ENCODE measurements at regions of chr14 and their contacts with region 1.

Region 1: GRCh38 chr14:104665657-104666522 is 23.5 kb upstream of the INF2 start:
- DNase-seq: peak in 7 of 9 donors; percentile 33 to 65 (median 55)
- ATAC-seq: peak; percentile 90
- H3K4me3 ChIP-seq: no peak overlapping the region
- H3K4me3 Mint-ChIP-seq: peak overlapping the region in 9 of 10 donors; percentile 7 to 80 (median 39)
- H3K27ac ChIP-seq: peak overlapping the region; percentile 17
- H3K27ac Mint-ChIP-seq: peak overlapping the region in 8 of 9 donors; percentile 60 to 90 (median 78)
- H3K4me1 ChIP-seq: peaks cover 12 to 14% of the 10 kb centered on the region in 2 donors
- H3K4me1 Mint-ChIP-seq: peaks cover 13 to 32% (median 24%) of the 10 kb centered on the region in 7 donors
- H3K27me3 ChIP-seq: peaks cover 0 to 5% of the 10 kb centered on the region in 2 donors
- H3K27me3 Mint-ChIP-seq: peaks cover 0 to 25% (median 8%) of the 10 kb centered on the region in 5 donors

Region 2: DNA sequence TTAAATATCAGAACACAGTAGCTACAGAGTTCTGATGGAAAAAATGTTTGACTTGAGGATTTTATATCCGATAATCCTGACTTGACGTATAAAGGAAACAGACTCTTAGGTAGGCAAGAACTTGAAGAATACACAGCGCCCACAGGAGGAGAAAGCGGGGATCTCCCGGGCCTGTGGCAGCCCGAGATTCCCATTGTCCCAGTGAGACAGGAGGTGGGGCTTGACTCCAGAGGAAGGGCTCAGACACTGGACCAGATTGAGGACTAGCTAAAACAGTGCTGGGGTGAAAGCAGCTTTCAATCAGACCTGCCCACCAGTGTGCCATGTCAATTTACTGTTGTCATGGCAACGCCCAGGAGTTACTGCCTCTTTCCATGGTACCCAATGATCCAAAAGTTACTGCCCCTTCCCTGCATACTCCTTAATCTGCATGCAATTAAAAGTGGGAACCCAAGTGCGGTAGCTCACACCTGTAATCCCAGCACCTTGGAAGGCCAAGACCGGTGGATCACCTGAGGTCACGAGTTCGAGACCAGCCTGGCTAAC is 137.3 kb before region 1 on chr14:
- CTCF ChIA-PET with region 1: no interaction called
- POLR2A ChIA-PET with region 1: no interaction called
- intact Hi-C with region 1: no loop called
- DNase-seq: no peak
- ATAC-seq: no peak
- H3K4me3 ChIP-seq: no peak overlapping the region
- H3K4me3 Mint-ChIP-seq: no peak overlapping the region
- H3K27ac ChIP-seq: no peak overlapping the region
- H3K27ac Mint-ChIP-seq: no peak overlapping the region
- H3K4me1 ChIP-seq: no peaks in the 10 kb centered on the region
- H3K4me1 Mint-ChIP-seq: peaks cover 0 to 22% (median 17%) of the 10 kb centered on the region in 7 donors
- H3K27me3 ChIP-seq: no peaks in the 10 kb centered on the region
- H3K27me3 Mint-ChIP-seq: peaks cover 0 to 12% (median 10%) of the 10 kb centered on the region in 5 donors

Region 3: GRCh38 chr14:104610749-104611310 is 55.1 kb before region 1 on chr14:
- CTCF ChIA-PET with region 1: no interaction called
- POLR2A ChIA-PET with region 1: no interaction called
- intact Hi-C with region 1: no loop called
- DNase-seq: no peak
- ATAC-seq: no peak
- H3K4me3 ChIP-seq: no peak overlapping the region
- H3K4me3 Mint-ChIP-seq: no peak overlapping the region
- H3K27ac ChIP-seq: no peak overlapping the region
- H3K27ac Mint-ChIP-seq: no peak overlapping the region
- H3K4me1 ChIP-seq: no peaks in the 10 kb centered on the region
- H3K4me1 Mint-ChIP-seq: no peaks in the 10 kb centered on the region
- H3K27me3 ChIP-seq: no peaks in the 10 kb centered on the region
- H3K27me3 Mint-ChIP-seq: peaks cover 20 to 43% (median 38%) of the 10 kb centered on the region in 5 donors

Region 4: DNA sequence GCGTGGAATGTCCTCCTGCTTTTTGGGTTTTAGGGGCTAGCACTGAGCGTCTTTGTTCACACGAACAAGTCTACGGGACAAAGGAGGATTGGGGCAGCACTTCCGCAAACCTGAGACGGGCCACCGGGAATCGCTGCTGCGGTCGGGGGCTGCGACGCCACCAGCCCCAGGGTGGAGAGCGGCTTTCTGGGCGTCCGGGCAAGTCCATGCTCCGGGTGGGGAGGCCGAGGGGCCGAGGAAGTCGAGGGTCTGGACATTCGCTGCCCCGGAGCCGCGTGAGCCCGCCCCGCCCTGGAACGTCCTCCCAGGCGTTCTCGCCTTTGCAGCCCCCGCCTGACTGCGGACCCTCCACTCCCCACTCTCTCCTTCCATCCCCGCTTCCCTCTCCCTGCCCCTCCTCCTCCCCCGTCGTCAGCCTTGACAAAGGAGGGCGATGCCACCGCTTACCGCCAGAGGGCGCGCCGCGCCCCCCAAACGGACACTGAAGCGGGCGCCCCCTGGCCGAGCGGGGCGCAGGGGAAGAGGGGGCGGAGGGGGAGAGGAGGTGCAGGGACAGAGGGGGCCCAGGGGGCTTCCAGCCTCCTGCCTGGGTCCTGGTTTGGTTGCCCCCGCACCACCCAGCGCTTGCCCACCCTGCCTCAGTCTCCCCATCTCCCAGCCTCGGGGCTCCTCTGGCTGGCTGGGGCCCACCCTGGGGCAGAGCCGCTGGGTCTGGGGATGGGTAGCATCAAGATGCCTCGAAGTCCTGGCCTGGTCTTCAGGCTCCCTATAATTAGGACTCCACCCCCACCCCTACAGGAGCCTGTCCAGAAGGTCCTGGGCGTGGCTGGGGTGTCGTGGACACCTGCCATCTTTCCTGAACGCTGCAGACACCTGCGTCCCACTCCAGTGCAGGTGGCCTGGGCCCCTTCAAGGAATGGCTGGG is 15.6 kb before region 1 on chr14:
- CTCF ChIA-PET with region 1: interaction called, 3 read pairs
- POLR2A ChIA-PET with region 1: no interaction called
- intact Hi-C with region 1: loop called in 1 of 2 experiments (anchors 1 kb)
- DNase-seq: peak; percentile 35 to 74 (median 53)
- ATAC-seq: peak; percentile 82
- H3K4me3 ChIP-seq: peak overlapping the region; percentile 51
- H3K4me3 Mint-ChIP-seq: peak overlapping the region in 8 of 10 donors; percentile 36 to 64 (median 55)
- H3K27ac ChIP-seq: no peak overlapping the region
- H3K27ac Mint-ChIP-seq: no peak overlapping the region
- H3K4me1 ChIP-seq: peaks cover 3 to 9% of the 10 kb centered on the region in 2 donors
- H3K4me1 Mint-ChIP-seq: peaks cover 0 to 3% (median 0%) of the 10 kb centered on the region in 7 donors
- H3K27me3 ChIP-seq: no peaks in the 10 kb centered on the region
- H3K27me3 Mint-ChIP-seq: peaks cover 0 to 18% (median 0%) of the 10 kb centered on the region in 5 donors

Region 5: DNA sequence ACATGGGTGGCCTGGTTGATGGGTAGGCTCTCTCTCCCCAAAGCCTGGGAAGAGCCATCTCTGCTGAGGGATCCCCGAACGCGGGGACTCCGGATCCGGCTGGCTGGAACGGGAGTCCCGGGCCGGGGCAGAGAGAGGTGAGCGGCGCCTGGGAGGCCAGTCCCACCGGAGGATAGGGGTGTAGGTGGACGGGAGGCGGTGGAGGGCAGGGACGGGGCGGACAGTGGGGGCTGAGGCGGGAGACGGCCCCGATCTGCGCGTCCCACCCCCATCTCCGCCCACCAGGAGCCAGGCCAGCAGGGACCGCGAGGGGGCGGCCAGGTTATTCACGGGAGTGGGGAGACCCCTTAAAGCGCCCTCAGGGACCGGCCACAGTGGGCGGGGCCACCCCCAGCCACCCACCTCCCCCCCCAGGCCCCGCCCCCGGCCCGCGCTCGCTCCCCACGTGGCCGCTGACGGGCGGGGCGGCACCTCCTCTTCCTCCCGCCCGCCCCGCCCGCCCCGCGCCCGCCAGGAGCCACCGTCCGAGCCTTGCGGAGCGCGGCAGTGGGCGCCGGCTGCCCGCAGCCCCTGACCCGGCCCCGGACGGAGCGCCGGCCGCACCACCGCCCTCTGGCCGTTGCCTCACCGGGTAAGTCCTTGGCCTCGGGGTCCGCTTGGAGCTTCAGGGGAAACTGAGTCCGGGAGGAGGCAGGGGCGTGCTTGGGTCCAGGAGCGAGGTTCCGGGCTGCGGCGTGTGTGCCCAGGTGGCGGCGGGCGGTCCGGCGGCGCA is 23.4 kb after region 1 on chr14 and contains the start of gene INF2:
- CTCF ChIA-PET with region 1: interaction called, 13 read pairs
- POLR2A ChIA-PET with region 1: interaction called, 6 read pairs
- intact Hi-C with region 1: loop called in 1 of 2 experiments (anchors 1 kb)
- DNase-seq: peak in 6 of 9 donors; percentile 36 to 64 (median 40)
- ATAC-seq: peak; percentile 79
- H3K4me3 ChIP-seq: peak within 1 kb of the TSS; percentile 70
- H3K4me3 Mint-ChIP-seq: peak within 1 kb of the TSS; percentile 58 to 91 (median 79)
- H3K27ac ChIP-seq: peak within 1 kb of the TSS; percentile 77
- H3K27ac Mint-ChIP-seq: peak within 1 kb of the TSS in 5 of 9 donors; percentile 8 to 90 (median 65)
- H3K4me1 ChIP-seq: peaks cover 10 to 62% of the 10 kb centered on the region in 2 donors
- H3K4me1 Mint-ChIP-seq: peaks cover 14 to 64% (median 48%) of the 10 kb centered on the region in 7 donors
- H3K27me3 ChIP-seq: no peaks in the 10 kb centered on the region
- H3K27me3 Mint-ChIP-seq: no peaks in the 10 kb centered on the region
- total RNA-seq, gene INF2: 65.0 to 140 (median 95.5) TPM

Region 6: GRCh38 chr14:104694991-104695659 is 29.2 kb after region 1 on chr14:
- CTCF ChIA-PET with region 1: interaction called, 8 read pairs
- POLR2A ChIA-PET with region 1: interaction called, 9 read pairs
- intact Hi-C with region 1: loop called in 1 of 2 experiments (anchors 1 kb)
- DNase-seq: peak in 8 of 9 donors; percentile 46 to 65 (median 59)
- ATAC-seq: peak; percentile 71
- H3K4me3 ChIP-seq: peak overlapping the region; percentile 47
- H3K4me3 Mint-ChIP-seq: peak overlapping the region; percentile 61 to 80 (median 76)
- H3K27ac ChIP-seq: peak overlapping the region; percentile 70
- H3K27ac Mint-ChIP-seq: peak overlapping the region; percentile 89 to 97 (median 93)
- H3K4me1 ChIP-seq: peaks cover 21 to 50% of the 10 kb centered on the region in 2 donors
- H3K4me1 Mint-ChIP-seq: peaks cover 8 to 49% (median 34%) of the 10 kb centered on the region in 7 donors
- H3K27me3 ChIP-seq: no peaks in the 10 kb centered on the region
- H3K27me3 Mint-ChIP-seq: no peaks in the 10 kb centered on the region

Region 7: GRCh38 chr14:105389976-105390848 is 724.3 kb after region 1 on chr14:
- CTCF ChIA-PET with region 1: no interaction called
- POLR2A ChIA-PET with region 1: no interaction called
- intact Hi-C with region 1: no loop called
- DNase-seq: no peak
- ATAC-seq: peak; percentile 54
- H3K4me3 ChIP-seq: no peak overlapping the region
- H3K4me3 Mint-ChIP-seq: no peak overlapping the region
- H3K27ac ChIP-seq: no peak overlapping the region
- H3K27ac Mint-ChIP-seq: peak overlapping the region in 1 of 9 donors; percentile 46
- H3K4me1 ChIP-seq: no peaks in the 10 kb centered on the region
- H3K4me1 Mint-ChIP-seq: peaks cover 0 to 7% (median 4%) of the 10 kb centered on the region in 7 donors
- H3K27me3 ChIP-seq: no peaks in the 10 kb centered on the region
- H3K27me3 Mint-ChIP-seq: no peaks in the 10 kb centered on the region

Measured in naive thymus-derived CD4-positive, alpha-beta T cell (primary cell).